Naive thymus-derived CD4-positive, alpha-beta T cell (primary cell): ENCODE measurements at regions of chr17 and their contacts with region 1.

Region 1: GRCh38 chr17:56833809-56834379 is at the starts of genes C17orf67 and DGKE:
- DNase-seq: peak; percentile 95 to 100 (median 98)
- ATAC-seq: peak; percentile 97
- H3K4me3 ChIP-seq: peak within 1 kb of the TSS; percentile 91
- H3K4me3 Mint-ChIP-seq: peak within 1 kb of the TSS; percentile 91 to 98 (median 95)
- H3K27ac ChIP-seq: peak within 1 kb of the TSS; percentile 85
- H3K27ac Mint-ChIP-seq: peak within 1 kb of the TSS; percentile 83 to 95 (median 93)
- H3K4me1 ChIP-seq: peaks cover 41 to 42% of the 10 kb centered on the region in 2 donors
- H3K4me1 Mint-ChIP-seq: peaks cover 34 to 74% (median 62%) of the 10 kb centered on the region in 7 donors
- H3K27me3 ChIP-seq: no peaks in the 10 kb centered on the region
- H3K27me3 Mint-ChIP-seq: no peaks in the 10 kb centered on the region
- total RNA-seq, gene C17orf67: 3.6 to 9.1 (median 5.4) TPM
- total RNA-seq, gene DGKE: 23.7 to 39.2 (median 35.6) TPM

Region 2: GRCh38 chr17:55264645-55265298 is 1569.1 kb before region 1 on chr17 and contains the start of gene HLF:
- CTCF ChIA-PET with region 1: no interaction called
- POLR2A ChIA-PET with region 1: no interaction called
- intact Hi-C with region 1: loop called in 1 of 2 experiments (anchors 10 kb)
- DNase-seq: peak; percentile 34 to 78 (median 68)
- ATAC-seq: peak; percentile 96
- H3K4me3 ChIP-seq: peak within 1 kb of the TSS; percentile 58
- H3K4me3 Mint-ChIP-seq: peak within 1 kb of the TSS; percentile 74 to 85 (median 80)
- H3K27ac ChIP-seq: no peak within 1 kb of the TSS
- H3K27ac Mint-ChIP-seq: peak within 1 kb of the TSS in 2 of 9 donors; percentile 41 to 49
- H3K4me1 ChIP-seq: peaks cover 15% of the 10 kb centered on the region in 2 donors
- H3K4me1 Mint-ChIP-seq: peaks cover 8 to 37% (median 21%) of the 10 kb centered on the region in 7 donors
- H3K27me3 ChIP-seq: peaks cover 13 to 29% of the 10 kb centered on the region in 2 donors
- H3K27me3 Mint-ChIP-seq: peaks cover 50 to 90% (median 72%) of the 10 kb centered on the region in 5 donors
- total RNA-seq, gene HLF: 0.19 to 2.6 (median 0.48) TPM

Region 3: DNA sequence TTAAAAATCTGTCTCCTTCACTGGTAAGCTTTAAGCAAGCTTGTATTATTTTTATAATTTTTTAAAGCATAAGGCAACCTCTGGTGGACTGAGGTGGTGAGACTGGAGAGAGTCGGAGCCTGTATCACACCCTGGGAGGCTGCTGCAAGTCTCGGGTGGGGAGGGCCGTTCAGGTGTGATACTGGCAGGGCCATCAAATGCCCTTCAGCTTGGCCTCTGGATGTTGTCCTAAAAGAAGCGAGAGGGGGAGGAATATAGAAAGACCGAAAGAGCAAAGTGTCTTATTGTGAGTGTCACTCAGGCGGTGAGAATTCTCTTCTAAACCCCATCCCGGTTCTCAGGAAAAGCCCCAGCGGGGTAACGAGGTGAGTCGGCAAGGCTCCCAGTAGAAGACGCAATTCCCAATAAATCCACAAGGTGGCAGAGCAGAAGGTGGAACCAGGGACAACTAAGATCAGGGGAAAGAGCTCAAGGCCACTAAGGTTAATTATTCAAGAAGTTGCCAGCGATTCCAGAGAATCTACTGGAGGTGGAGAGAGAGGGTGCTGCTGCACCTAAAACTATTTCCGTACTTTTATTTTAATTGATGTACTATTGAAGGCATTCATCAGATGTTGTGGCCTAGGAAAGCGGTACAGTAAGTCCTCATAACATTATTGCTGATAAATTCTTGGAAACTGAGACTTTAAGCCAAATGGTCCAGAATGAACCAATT is 14.3 kb before region 1 on chr17:
- CTCF ChIA-PET with region 1: interaction called, 11 read pairs
- POLR2A ChIA-PET with region 1: interaction called, 30 read pairs
- intact Hi-C with region 1: loop called (anchors 1 kb)
- DNase-seq: peak; percentile 38 to 78 (median 68)
- ATAC-seq: peak; percentile 90
- H3K4me3 ChIP-seq: no peak overlapping the region
- H3K4me3 Mint-ChIP-seq: no peak overlapping the region
- H3K27ac ChIP-seq: no peak overlapping the region
- H3K27ac Mint-ChIP-seq: peak overlapping the region in 2 of 9 donors; percentile 48 to 76
- H3K4me1 ChIP-seq: no peaks in the 10 kb centered on the region
- H3K4me1 Mint-ChIP-seq: peaks cover 5 to 9% (median 8%) of the 10 kb centered on the region in 7 donors
- H3K27me3 ChIP-seq: no peaks in the 10 kb centered on the region
- H3K27me3 Mint-ChIP-seq: no peaks in the 10 kb centered on the region

Region 4: DNA sequence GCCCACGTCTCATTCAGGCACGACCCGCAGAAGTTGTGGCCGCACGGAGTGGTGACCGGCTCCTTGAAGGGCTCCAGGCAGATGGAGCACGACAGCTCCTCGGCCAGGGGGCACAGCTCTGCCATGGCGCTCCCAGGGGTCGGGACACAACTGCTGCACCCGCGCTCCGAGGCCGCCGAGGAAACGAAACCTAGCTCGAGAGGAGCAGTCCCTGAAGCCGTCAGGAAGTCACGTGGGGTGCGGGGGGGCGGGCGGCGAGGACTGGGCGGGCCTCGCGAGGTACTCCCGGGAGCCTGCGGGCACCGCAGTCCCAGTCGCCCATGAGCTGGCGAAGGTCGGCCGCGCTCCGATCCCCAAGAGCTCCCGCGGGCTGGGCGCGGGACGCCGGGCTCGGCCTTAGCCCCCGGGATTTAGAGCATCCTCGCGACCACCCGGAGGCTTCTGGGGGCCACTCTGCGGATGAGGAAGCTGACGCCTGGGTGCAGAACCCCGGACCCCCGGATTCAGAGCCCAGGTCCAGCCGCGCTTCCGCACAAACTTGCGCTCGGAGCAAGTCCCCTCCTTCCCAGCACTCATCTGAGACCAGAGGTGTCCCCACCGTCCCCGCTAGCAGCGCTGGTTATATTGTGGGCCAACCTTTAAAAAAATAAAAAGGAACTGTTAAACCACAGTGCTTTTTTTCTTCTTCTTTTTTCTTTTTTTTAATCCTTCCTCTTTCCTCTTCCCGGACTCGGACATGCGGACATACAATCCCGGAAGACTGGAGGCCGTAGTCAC is 80.2 kb after region 1 on chr17 and contains the start of gene TRIM25:
- CTCF ChIA-PET with region 1: no interaction called
- POLR2A ChIA-PET with region 1: interaction called, 5 read pairs
- intact Hi-C with region 1: loop called (anchors 1 kb)
- DNase-seq: peak; percentile 57 to 90 (median 79)
- ATAC-seq: peak; percentile 91
- H3K4me3 ChIP-seq: peak within 1 kb of the TSS; percentile 93
- H3K4me3 Mint-ChIP-seq: peak within 1 kb of the TSS; percentile 80 to 97 (median 91)
- H3K27ac ChIP-seq: peak within 1 kb of the TSS; percentile 90
- H3K27ac Mint-ChIP-seq: peak within 1 kb of the TSS; percentile 88 to 95 (median 93)
- H3K4me1 ChIP-seq: peaks cover 29 to 35% of the 10 kb centered on the region in 2 donors
- H3K4me1 Mint-ChIP-seq: peaks cover 20 to 52% (median 46%) of the 10 kb centered on the region in 7 donors
- H3K27me3 ChIP-seq: no peaks in the 10 kb centered on the region
- H3K27me3 Mint-ChIP-seq: no peaks in the 10 kb centered on the region
- total RNA-seq, gene TRIM25: 45.9 to 133 (median 61.8) TPM

Region 5: DNA sequence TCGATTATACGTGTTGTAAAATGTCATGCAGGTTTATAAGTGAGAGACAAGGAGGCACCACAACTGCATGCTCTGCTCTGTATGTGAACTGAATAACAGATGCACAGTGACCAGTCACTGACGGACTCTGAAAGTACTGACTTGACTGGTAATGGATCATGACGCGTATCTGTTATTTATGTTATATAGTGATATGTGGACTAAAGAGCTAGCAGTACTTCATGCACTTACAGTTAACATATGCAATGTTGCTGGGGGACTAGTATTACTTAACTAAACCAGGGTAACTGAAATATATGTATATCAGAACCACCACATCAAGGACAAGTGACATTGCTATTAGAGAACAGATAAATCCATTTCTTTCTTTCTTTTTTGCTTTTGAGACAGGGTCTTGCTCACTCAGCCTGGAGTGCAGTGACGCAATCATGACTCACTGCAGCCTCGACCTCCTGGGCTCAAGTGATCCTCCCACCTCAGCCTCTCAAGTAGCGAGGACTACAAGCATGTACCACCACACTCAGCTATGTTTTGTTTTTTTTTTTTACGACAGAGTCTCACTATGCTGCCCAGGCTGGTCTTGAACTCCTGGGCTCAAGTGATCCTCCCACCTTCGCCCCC is 109.7 kb after region 1 on chr17:
- CTCF ChIA-PET with region 1: no interaction called
- POLR2A ChIA-PET with region 1: no interaction called
- intact Hi-C with region 1: no loop called
- DNase-seq: no peak
- ATAC-seq: no peak
- H3K4me3 ChIP-seq: no peak overlapping the region
- H3K4me3 Mint-ChIP-seq: no peak overlapping the region
- H3K27ac ChIP-seq: no peak overlapping the region
- H3K27ac Mint-ChIP-seq: no peak overlapping the region
- H3K4me1 ChIP-seq: no peaks in the 10 kb centered on the region
- H3K4me1 Mint-ChIP-seq: peaks cover 0 to 8% (median 0%) of the 10 kb centered on the region in 7 donors
- H3K27me3 ChIP-seq: no peaks in the 10 kb centered on the region
- H3K27me3 Mint-ChIP-seq: no peaks in the 10 kb centered on the region

Region 6: DNA sequence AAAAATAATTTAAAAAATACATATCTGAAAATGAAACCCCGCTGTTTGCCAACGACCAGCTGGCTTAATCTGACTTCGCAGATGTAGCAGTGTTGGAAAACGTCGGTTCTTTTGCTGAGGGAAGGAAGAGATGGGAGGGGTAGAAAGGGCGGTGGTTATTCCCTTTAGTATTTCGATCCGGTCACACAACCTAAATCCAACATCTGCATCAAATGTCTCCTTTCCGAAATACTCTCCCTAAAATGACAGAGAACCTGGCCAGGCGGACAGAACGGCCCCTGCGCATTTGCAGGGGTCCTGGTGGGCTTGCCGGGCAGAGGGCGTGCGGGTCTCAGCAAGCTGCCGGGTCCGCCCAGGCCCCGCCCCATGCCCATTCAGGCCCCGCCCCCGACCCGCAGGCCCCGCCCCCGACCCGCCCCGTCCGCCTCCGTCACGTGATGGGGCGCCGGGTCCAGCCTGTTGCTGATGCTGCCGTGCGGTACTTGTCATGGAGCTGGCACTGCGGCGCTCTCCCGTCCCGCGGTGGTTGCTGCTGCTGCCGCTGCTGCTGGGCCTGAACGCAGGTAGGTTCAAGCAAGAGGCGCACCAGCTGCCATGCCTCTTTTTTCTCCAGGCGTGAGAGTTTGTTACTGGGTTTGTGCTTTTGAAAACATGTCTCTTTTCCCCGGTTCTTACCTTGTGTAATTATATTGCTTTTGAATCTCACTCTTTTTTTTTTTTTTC is 143.9 kb after region 1 on chr17 and contains the start of gene SCPEP1:
- CTCF ChIA-PET with region 1: no interaction called
- POLR2A ChIA-PET with region 1: interaction called, 4 read pairs
- intact Hi-C with region 1: loop called in 1 of 2 experiments (anchors 1 kb)
- DNase-seq: peak; percentile 65 to 82 (median 76)
- ATAC-seq: peak; percentile 99
- H3K4me3 ChIP-seq: peak within 1 kb of the TSS; percentile 92
- H3K4me3 Mint-ChIP-seq: peak within 1 kb of the TSS; percentile 85 to 96 (median 93)
- H3K27ac ChIP-seq: peak within 1 kb of the TSS; percentile 63
- H3K27ac Mint-ChIP-seq: peak within 1 kb of the TSS; percentile 70 to 98 (median 86)
- H3K4me1 ChIP-seq: peaks cover 10 to 12% of the 10 kb centered on the region in 2 donors
- H3K4me1 Mint-ChIP-seq: peaks cover 11 to 33% (median 24%) of the 10 kb centered on the region in 7 donors
- H3K27me3 ChIP-seq: no peaks in the 10 kb centered on the region
- H3K27me3 Mint-ChIP-seq: peaks cover 0 to 32% (median 0%) of the 10 kb centered on the region in 5 donors
- total RNA-seq, gene SCPEP1: 8.4 to 81.6 (median 27.1) TPM